Activated naive CD4-positive, alpha-beta T cell treated with anti-CD3 and anti-CD28 coated beads for 36 hours (primary cell): ENCODE measurements at regions of chrX and their contacts with region 1.

Region 1: GRCh38 chrX:135923353-135923752 is 29.8 kb downstream of the SAGE1 start:
- DNase-seq: peak; percentile 8
- H3K4me3 Mint-ChIP-seq: no peak overlapping the region
- H3K27ac Mint-ChIP-seq: no peak overlapping the region
- H3K4me1 Mint-ChIP-seq: no peaks in the 10 kb centered on the region
- H3K27me3 Mint-ChIP-seq: no peaks in the 10 kb centered on the region

Region 2: GRCh38 chrX:136162831-136163570 is 239.6 kb after region 1 on chrX:
- CTCF ChIA-PET with region 1: no interaction called
- intact Hi-C with region 1: loop called (anchors 10 kb)
- DNase-seq: peak; percentile 72
- H3K4me3 Mint-ChIP-seq: no peak overlapping the region
- H3K27ac Mint-ChIP-seq: no peak overlapping the region
- H3K4me1 Mint-ChIP-seq: peaks cover 3% of the 10 kb centered on the region
- H3K27me3 Mint-ChIP-seq: no peaks in the 10 kb centered on the region